ENCODE measurements at regions of chr2 and their contacts with region 1.

Region 1: DNA sequence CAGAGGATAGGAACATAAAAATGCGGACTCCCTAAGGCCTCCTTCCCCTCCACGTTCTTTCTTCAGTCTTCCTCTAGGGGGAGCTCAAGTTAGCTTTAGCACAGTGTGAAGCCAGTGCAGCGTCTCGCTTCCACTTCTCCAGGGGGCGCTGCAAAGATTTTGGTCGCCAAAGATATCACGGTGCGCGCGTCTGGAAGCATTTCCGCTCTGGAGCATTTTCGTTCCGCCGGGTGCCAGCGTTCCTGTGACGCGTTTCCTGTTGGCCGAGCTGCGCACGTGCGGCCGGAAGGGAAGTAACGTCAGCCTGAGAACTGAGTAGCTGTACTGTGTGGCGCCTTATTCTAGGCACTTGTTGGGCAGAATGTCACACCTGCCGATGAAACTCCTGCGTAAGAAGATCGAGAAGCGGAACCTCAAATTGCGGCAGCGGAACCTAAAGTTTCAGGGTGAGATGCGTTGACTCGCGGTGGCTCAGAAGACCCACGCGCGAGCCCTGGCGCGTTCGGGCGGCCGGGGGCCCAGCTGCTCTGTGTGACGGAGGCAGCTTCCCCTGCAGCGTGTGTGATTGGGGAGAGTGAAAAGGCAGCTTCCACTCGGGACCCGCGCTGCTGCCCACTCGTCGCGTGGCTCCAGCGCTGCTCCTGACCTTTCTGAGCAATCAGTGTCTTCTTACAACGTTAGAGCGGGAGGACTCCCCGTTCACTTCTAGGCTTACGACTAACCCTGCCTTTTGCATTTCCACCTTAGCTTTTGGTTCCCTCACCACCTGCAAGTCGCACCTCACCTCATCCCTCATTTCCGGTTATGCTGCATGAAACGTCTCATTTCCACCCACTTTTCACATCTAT is at the start of gene DDX18:
- DNase-seq: peak; percentile 81
- H3K4me3 ChIP-seq: peak within 1 kb of the TSS; percentile 90
- H3K27me3 ChIP-seq: no peaks in the 10 kb centered on the region
- CTCF ChIP-seq: peak; percentile 100
- polyA plus RNA-seq, gene DDX18: 30.9 and 42.8 TPM in 2 replicates

Region 2: GRCh38 chr2:117801826-117802225 is 12.8 kb before region 1 on chr2:
- CTCF ChIA-PET with region 1: interaction called, 26 read pairs
- POLR2A ChIA-PET with region 1: no interaction called
- DNase-seq: peak; percentile 47
- H3K4me3 ChIP-seq: no peak overlapping the region
- H3K27me3 ChIP-seq: no peaks in the 10 kb centered on the region
- CTCF ChIP-seq: no peak

Region 3: GRCh38 chr2:117943013-117943672 is 128.5 kb after region 1 on chr2:
- CTCF ChIA-PET with region 1: interaction called, 11 read pairs
- POLR2A ChIA-PET with region 1: no interaction called
- DNase-seq: peak; percentile 77
- H3K4me3 ChIP-seq: no peak overlapping the region
- H3K27me3 ChIP-seq: no peaks in the 10 kb centered on the region
- CTCF ChIP-seq: no peak

Region 4: GRCh38 chr2:117989854-117990438 is 175.3 kb after region 1 on chr2:
- CTCF ChIA-PET with region 1: interaction called, 12 read pairs
- POLR2A ChIA-PET with region 1: no interaction called
- DNase-seq: no peak
- H3K4me3 ChIP-seq: no peak overlapping the region
- H3K27me3 ChIP-seq: no peaks in the 10 kb centered on the region
- CTCF ChIP-seq: no peak

Region 5: DNA sequence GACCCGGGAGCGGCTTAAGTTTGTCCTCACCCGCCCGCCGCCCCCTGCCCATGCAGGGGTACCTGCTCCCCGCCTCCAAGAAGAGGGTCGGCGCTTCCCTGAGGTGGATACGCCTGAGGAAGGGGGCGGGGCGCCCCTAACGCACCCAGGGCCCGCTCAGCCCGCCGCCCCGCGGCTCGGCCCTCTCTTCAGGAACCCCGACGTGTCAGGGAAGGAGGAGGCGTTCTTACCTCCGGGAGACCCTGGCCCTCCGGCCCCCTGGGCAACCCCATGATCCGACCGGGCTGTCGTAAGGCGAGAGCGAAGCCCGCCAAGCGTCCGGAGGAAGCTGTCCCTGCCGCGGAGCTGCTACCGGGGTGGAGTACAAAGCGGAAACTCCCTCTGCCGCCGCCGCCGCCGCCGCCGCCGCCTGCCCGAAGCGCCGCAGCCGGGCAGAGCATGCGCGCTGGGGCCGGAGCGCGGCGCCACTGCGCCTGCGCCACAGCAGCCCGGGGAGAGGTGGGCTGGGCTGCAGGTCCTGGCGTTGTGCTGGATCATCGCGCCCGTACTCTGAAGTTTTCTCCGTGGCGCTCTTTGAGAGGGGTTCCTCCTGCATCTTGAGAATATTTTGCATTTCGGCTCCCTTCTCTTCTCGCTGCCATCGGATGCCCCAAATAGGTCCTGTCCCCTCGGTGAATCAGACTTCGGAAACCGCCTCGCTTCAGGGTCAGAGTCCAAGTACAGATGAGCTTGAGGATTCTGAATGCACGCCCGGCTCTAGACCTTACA is 199.3 kb after region 1 on chr2 and contains the start of gene CCDC93:
- CTCF ChIA-PET with region 1: interaction called, 11 read pairs
- POLR2A ChIA-PET with region 1: no interaction called
- DNase-seq: peak; percentile 31
- H3K4me3 ChIP-seq: peak within 1 kb of the TSS; percentile 61
- H3K27me3 ChIP-seq: no peaks in the 10 kb centered on the region
- CTCF ChIP-seq: no peak
- polyA plus RNA-seq, gene CCDC93: 12.8 and 17.3 TPM in 2 replicates